ENCODE measurements at regions of chr9 and their contacts with region 1.

Region 1: DNA sequence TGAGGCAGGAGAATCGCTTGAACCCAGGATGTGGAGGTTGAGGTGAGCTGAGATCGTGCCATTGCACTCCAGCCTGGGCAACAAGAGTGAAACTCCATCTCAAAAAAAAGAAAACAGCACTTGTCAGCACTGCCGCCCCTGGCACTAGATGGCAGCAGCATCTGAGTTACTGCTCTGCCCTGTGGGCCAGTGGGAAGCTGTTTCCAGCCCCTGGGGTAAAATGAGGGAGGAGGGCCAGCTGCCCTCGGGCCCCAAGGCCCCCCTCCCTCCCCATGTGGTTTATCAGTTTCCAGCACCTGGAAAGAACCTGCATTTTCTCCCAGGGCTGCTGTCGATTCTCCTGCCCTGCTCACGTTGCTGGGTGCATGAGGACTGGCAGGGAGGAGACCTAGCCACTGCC is 13.2 kb upstream of the CEL start:
- H3K4me3 Mint-ChIP-seq: no peak overlapping the region
- H3K27ac Mint-ChIP-seq: no peak overlapping the region
- H3K4me1 Mint-ChIP-seq: no peaks in the 10 kb centered on the region
- H3K27me3 Mint-ChIP-seq: no peaks in the 10 kb centered on the region

Region 2: GRCh38 chr9:133098104-133098890 is 49.7 kb after region 1 on chr9:
- intact Hi-C with region 1: loop called (anchors 5 kb)
- H3K4me3 Mint-ChIP-seq: no peak overlapping the region
- H3K27ac Mint-ChIP-seq: peak overlapping the region; percentile 16
- H3K4me1 Mint-ChIP-seq: no peaks in the 10 kb centered on the region
- H3K27me3 Mint-ChIP-seq: no peaks in the 10 kb centered on the region

Region 3: DNA sequence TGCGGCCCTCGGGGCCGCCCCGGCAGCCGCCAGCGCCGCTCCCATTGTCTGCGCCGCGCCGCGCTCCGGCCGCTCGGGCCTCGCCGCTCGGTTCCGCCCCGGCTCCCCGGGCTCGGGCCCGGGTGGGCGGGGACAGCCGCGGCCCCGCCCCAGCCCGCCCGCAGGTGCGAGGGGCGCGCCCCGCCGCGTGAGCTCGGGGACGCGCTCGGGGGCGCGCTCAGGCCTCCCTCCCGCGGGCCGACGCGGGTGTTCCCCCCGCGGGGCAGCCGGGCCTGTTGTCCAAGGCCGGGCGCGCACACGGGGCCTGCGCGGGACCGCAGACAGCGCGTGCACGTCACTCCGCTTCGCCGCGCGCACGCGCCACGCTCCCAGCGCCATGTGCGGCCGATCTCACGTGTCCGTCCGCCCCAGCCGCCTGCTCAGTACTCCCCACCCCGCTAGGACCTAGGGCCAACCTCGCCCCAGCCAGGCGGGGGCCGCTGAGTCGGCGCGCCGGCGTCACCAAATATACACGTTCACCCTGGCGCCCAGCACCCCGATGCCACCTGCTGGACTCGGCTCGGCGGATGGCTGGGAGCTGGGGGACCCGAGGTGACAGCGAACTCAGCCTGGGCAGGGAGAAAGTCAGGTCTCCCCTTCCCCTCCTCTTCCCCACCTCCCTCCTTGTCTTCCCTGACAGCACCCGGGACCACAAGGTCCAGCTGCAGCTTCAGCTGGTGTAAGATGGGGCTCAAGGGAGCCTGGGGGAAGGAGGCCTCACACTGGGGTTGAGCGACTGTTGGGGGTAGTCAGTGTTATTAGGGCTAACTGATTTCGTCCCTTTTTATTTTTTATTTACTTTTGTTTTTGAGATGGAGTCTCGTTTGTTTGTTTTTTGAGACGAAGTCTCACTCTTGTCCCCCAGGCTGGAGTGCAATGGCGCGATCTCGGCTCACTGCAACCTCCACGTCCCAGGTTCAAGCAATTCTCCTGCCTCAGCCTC is 100.8 kb after region 1 on chr9:
- intact Hi-C with region 1: loop called (anchors 5 kb)
- H3K4me3 Mint-ChIP-seq: peak overlapping the region; percentile 74
- H3K27ac Mint-ChIP-seq: peak overlapping the region; percentile 84
- H3K4me1 Mint-ChIP-seq: peaks cover 53% of the 10 kb centered on the region
- H3K27me3 Mint-ChIP-seq: peaks cover 8% of the 10 kb centered on the region